A673 (cell line): ENCODE measurements at regions of chr3 and their contacts with region 1.

Region 1: DNA sequence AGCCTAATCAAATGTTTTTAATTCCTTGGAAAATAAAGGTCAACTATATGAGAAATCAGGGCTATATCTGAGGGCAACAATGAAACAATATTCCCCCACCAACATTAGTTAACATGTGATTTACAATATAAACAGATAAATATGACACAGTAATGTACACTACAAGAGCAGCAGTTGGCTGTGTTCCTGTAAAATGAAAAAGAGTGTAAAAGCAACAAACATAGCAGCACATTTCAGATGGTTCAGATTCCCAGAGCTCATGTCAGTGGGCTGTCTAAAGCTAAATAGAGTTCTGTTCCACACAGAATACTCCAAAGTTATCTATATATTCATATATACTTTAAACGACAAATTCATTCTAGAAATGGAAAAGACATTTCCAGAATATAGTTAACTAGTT is 42.6 kb downstream of the ANKRD28 start:
- DNase-seq: no peak
- H3K4me3 ChIP-seq: no peak overlapping the region
- H3K27ac ChIP-seq: no peak overlapping the region
- H3K4me1 ChIP-seq: peaks cover 4% of the 10 kb centered on the region
- H3K27me3 ChIP-seq: no peaks in the 10 kb centered on the region
- CTCF ChIP-seq: no peak

Region 2: DNA sequence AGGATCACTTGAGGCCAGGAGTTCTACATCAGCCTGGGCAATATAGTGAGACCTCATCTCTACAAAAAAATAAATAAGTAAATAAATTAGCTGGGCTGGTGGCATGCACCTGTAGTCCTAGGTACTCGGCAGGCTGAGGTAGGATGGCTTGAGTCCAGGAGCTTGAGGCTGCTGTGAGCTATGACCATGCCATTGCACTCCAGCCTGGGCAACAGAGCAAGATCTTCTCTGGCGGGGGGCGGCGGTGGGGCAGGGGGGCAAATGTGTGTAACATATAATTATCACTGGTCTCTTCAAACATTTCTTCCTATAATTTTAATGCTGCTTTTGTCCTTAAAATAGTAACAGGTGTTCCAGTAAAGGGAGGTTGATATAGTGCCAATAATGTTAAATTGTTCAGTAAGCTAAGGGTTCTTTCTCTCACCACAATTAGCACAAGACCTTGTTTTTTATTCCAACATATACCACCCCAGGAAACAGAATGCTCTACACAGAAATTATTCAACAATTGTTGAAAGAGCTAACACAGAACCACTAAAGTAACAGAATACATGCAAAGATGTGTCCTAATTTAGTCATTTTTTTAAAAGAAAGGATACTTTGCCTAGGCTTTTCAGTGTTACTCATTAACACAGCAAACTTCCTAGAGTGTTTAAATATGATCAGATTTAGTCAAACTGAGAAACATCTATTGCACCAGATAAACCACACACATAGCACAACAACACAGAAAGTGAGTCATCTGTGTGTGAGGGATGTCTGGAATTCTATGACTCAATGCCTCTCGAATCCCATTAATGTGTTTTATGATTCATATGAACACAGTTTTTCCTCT is 13.5 kb after region 1 on chr3:
- CTCF ChIA-PET with region 1: no interaction called
- POLR2A ChIA-PET with region 1: interaction called, 10 read pairs
- intact Hi-C with region 1: no loop called
- DNase-seq: peak; percentile 77
- H3K4me3 ChIP-seq: no peak overlapping the region
- H3K27ac ChIP-seq: peak overlapping the region; percentile 4
- H3K4me1 ChIP-seq: peaks cover 15% of the 10 kb centered on the region
- H3K27me3 ChIP-seq: no peaks in the 10 kb centered on the region
- CTCF ChIP-seq: no peak